Caki2 (cell line): ENCODE measurements at regions of chr22 and their contacts with region 1.

Region 1: GRCh38 chr22:40636380-40637182 is at the start of gene MRTFA:
- DNase-seq: peak; percentile 100
- total RNA-seq, gene MRTFA: 9.4 and 24.6 TPM in 2 replicates

Region 2: GRCh38 chr22:40363059-40363458 is 273.5 kb before region 1 on chr22:
- in situ Hi-C with region 1: loop called (anchors 25 kb)
- DNase-seq: no peak

Region 3: GRCh38 chr22:40509401-40510134 is 127.0 kb before region 1 on chr22:
- in situ Hi-C with region 1: loop called (anchors 10 kb)
- DNase-seq: peak; percentile 88